Calu3 (cell line): ENCODE measurements at regions of chr5 and their contacts with region 1.

Region 1: GRCh38 chr5:154683101-154683880 is 71.9 kb upstream of the LARP1 start:
- DNase-seq: no peak
- H3K4me3 Mint-ChIP-seq: peak overlapping the region; percentile 69
- H3K27ac Mint-ChIP-seq: peak overlapping the region; percentile 91
- H3K4me1 Mint-ChIP-seq: peaks cover 27% of the 10 kb centered on the region
- H3K27me3 Mint-ChIP-seq: no peaks in the 10 kb centered on the region
- CTCF ChIP-seq: no peak

Region 2: GRCh38 chr5:154697371-154697770 is 14.1 kb after region 1 on chr5:
- CTCF ChIA-PET with region 1: interaction called, 11 read pairs
- intact Hi-C with region 1: no loop called
- DNase-seq: no peak
- H3K4me3 Mint-ChIP-seq: no peak overlapping the region
- H3K27ac Mint-ChIP-seq: no peak overlapping the region
- H3K4me1 Mint-ChIP-seq: peaks cover 13% of the 10 kb centered on the region
- H3K27me3 Mint-ChIP-seq: no peaks in the 10 kb centered on the region
- CTCF ChIP-seq: no peak

Region 3: GRCh38 chr5:154714266-154714986 is 31.1 kb after region 1 on chr5:
- CTCF ChIA-PET with region 1: interaction called, 6 read pairs
- intact Hi-C with region 1: loop called (anchors 2 kb)
- DNase-seq: peak; percentile 34
- H3K4me3 Mint-ChIP-seq: peak overlapping the region; percentile 52
- H3K27ac Mint-ChIP-seq: peak overlapping the region; percentile 67
- H3K4me1 Mint-ChIP-seq: peaks cover 37% of the 10 kb centered on the region
- H3K27me3 Mint-ChIP-seq: no peaks in the 10 kb centered on the region
- CTCF ChIP-seq: no peak

Region 4: DNA sequence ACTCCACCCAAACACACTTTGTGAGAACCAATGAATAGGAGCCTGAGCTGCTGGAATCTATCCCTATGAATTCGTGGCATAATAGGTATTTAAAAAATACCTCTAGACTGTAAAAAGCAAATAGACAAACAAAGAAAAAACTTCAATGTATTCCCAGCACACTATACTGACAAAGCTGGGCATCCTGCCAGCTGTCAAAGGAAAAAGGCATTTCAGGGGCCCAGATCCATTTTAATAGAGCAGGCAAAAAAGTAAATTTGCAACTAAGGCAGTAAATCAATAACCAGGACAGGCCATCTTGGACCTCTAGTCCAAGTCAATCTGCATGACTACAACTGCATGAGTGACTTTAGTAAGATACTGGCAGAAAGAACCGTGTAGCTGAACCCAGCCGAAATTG is 46.3 kb after region 1 on chr5:
- CTCF ChIA-PET with region 1: interaction called, 10 read pairs
- intact Hi-C with region 1: no loop called
- DNase-seq: peak; percentile 58
- H3K4me3 Mint-ChIP-seq: no peak overlapping the region
- H3K27ac Mint-ChIP-seq: peak overlapping the region; percentile 18
- H3K4me1 Mint-ChIP-seq: peaks cover 16% of the 10 kb centered on the region
- H3K27me3 Mint-ChIP-seq: no peaks in the 10 kb centered on the region
- CTCF ChIP-seq: no peak

Region 5: GRCh38 chr5:155827949-155828348 is 1144.7 kb after region 1 on chr5:
- CTCF ChIA-PET with region 1: no interaction called
- intact Hi-C with region 1: no loop called
- DNase-seq: no peak
- H3K4me3 Mint-ChIP-seq: no peak overlapping the region
- H3K27ac Mint-ChIP-seq: no peak overlapping the region
- H3K4me1 Mint-ChIP-seq: no peaks in the 10 kb centered on the region
- H3K27me3 Mint-ChIP-seq: no peaks in the 10 kb centered on the region
- CTCF ChIP-seq: no peak